ENCODE measurements at regions of chr1 and their contacts with region 1.

Region 1: DNA sequence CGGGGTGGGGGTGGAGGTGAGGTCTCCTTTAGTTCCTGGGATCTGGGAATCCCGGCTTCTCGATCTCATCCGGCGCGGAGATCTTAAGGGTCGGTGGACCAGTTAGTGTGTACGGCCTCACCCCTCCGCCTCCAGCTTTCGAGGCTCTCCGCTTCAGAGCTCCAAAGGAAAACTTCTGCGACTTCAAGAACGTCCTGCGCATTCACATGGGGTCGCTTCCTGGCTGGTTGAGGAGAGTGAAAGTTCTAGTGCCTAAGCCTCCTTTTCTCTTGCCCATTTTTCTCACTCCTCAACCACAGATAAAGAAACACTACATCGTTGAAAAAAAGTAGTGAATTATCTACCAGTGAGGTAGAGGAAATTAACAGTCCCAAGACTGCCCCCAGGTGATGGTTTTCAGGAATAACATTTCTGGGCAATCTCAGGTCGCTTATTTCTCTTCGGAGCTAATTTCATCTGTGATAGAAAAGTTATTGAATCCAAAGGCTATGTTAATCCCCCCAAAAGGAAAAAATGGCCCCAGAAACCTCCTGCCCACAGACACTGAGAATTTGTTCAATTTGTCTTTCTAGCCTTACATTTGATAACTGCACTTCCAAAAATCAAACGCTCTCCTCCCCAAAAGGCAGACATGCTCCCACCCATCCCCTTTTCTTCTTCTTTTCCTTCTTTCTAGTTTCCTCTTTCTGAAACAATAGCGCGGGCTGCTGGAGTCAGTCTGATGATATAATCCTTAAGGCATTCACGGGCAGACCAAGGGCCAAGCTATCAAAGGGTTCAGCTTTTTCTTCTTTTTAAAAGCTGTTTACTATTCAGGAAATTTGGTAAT is 20.6 kb upstream of the TBX15 start:
- DNase-seq: peak; percentile 44
- ATAC-seq: peak; percentile 69
- H3K4me3 ChIP-seq: no peak overlapping the region
- H3K27ac ChIP-seq: no peak overlapping the region
- H3K4me1 ChIP-seq: no peaks in the 10 kb centered on the region
- H3K27me3 ChIP-seq: no peaks in the 10 kb centered on the region
- CTCF ChIP-seq: peak; percentile 69
- EP300 ChIP-seq: no peak
- POLR2A ChIP-seq: no peak
- RAD21 ChIP-seq: peak; percentile 73

Region 2: DNA sequence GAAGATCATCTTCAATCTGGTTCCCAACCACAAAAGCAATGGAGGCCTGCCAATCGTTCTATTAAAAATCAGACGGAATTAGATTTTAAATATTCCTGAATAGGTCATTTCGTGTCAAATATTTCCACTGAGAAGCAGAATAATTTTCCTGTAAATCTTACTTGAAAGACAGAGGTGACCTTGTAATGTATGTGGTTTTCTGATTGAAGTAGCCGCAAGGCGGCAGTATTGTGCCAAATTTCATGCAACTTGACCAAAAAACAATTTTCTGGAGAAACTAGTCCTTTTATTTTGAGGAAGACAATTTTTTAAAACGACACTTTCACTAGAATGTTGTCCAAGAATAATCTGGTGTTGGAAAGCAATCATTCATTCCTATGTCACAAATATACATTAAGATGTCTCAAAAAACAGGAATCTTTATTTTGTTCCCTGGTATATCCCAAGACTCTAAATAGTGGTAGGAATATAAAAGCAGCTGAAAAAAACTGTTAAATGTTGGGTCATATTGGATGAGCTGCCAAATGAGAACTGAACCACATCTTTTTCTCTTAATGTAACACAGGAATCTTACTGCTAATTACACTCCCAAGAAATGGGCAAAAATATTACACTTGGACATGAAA is 857.3 kb before region 1 on chr1:
- CTCF ChIA-PET with region 1: no interaction called
- POLR2A ChIA-PET with region 1: no interaction called
- in situ Hi-C with region 1: loop called (anchors 25 kb)
- intact Hi-C with region 1: no loop called
- DNase-seq: peak; percentile 23
- ATAC-seq: no peak
- H3K4me3 ChIP-seq: no peak overlapping the region
- H3K27ac ChIP-seq: no peak overlapping the region
- H3K4me1 ChIP-seq: no peaks in the 10 kb centered on the region
- H3K27me3 ChIP-seq: no peaks in the 10 kb centered on the region
- CTCF ChIP-seq: peak; percentile 67
- EP300 ChIP-seq: no peak
- POLR2A ChIP-seq: no peak
- RAD21 ChIP-seq: no peak

Region 3: DNA sequence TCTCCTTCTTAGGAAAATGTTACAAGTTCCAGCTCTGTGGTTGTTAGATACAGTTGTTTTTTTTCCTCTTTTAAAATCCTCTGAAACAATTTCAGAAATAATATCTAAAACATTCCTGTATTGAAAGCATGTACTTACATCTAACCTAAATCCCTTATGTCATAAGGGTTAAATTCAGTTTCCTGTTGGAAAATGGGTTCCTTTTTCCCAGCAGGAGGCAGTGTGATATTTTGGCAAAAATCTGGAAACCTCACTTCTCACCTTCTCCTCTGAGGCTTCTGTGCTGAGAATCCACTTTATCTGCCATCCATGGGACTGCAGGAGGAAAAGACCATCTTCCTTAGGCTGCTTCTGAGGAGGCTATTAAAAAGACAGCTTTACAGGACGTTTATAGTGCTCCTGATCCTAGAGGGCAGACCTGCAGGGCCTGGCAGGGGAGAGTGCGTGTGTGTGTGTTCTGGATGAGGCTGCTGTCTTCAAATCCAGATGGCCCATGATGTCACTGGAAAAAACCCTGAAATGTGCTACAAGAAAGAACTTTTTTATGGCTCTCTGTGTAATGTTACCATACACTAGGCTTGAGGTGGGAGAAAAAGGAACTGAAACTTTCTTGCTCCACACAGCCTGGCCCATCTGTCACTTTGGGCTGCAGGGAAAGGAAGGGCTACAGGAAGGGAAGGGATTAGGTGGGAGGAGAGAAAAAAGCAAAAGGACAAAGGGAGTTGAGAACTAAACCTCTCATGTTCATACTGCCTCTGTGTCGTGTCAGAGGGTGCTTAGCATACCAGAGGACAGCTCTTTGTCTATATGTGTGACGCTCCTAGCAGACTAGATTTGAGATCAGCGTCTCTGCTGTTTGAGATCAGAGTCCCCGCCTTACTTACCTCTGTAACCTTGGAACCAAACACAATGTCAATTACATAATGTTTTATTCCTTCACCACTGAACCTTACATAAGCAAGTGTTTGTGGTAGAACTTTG is 444.4 kb before region 1 on chr1:
- CTCF ChIA-PET with region 1: no interaction called
- POLR2A ChIA-PET with region 1: no interaction called
- in situ Hi-C with region 1: loop called (anchors 25 kb)
- intact Hi-C with region 1: no loop called
- DNase-seq: no peak
- ATAC-seq: no peak
- H3K4me3 ChIP-seq: no peak overlapping the region
- H3K27ac ChIP-seq: no peak overlapping the region
- H3K4me1 ChIP-seq: no peaks in the 10 kb centered on the region
- H3K27me3 ChIP-seq: no peaks in the 10 kb centered on the region
- CTCF ChIP-seq: peak; percentile 19
- EP300 ChIP-seq: no peak
- POLR2A ChIP-seq: no peak
- RAD21 ChIP-seq: no peak

Region 4: DNA sequence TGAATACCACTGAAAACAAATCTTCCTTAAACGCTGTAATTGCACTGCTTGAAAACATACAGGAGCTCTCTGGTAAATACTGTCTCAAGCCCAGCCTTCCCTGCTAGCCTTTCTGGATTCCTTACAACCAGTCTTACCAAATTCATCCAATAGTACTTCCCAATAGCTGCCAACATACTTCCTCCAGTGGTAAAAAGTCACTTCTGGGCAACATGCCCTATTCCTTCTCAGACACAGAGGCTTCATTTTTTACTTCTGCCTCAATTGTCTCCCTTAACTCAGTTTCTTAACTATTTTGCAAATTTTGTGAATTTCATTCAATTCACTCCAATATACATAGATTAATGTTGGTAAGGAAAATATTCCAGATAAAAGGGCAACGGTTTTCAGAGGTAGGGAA is 186.9 kb before region 1 on chr1:
- CTCF ChIA-PET with region 1: interaction called, 6 read pairs
- POLR2A ChIA-PET with region 1: no interaction called
- in situ Hi-C with region 1: no loop called
- intact Hi-C with region 1: loop called (anchors 5 kb)
- DNase-seq: no peak
- ATAC-seq: no peak
- H3K4me3 ChIP-seq: no peak overlapping the region
- H3K27ac ChIP-seq: no peak overlapping the region
- H3K4me1 ChIP-seq: no peaks in the 10 kb centered on the region
- H3K27me3 ChIP-seq: no peaks in the 10 kb centered on the region
- CTCF ChIP-seq: no peak
- EP300 ChIP-seq: no peak
- POLR2A ChIP-seq: no peak
- RAD21 ChIP-seq: no peak

Region 5: DNA sequence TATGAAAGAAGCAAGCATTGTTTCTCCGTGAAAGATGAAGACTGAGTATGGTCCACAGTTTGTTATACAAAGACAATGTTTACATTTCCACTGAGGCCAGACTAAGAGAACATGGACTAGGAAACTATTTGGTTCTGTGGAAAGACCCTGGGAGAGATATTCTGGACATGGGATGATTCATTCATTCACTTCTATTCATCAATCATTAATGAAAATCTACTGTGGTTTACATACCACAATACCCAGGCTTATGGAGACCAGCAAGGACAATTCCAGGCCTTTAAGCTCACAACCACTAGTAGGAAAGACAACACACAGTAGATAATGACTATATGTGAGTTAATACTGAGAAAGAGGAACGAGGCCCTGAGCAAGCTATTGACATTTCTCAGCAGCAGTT is 145.9 kb before region 1 on chr1:
- CTCF ChIA-PET with region 1: no interaction called
- POLR2A ChIA-PET with region 1: no interaction called
- in situ Hi-C with region 1: no loop called
- intact Hi-C with region 1: loop called (anchors 5 kb)
- DNase-seq: peak; percentile 9
- ATAC-seq: peak; percentile 48; the same call in 1 of the 3 replicates
- H3K4me3 ChIP-seq: no peak overlapping the region
- H3K27ac ChIP-seq: no peak overlapping the region
- H3K4me1 ChIP-seq: peaks cover 16% of the 10 kb centered on the region; the same call in 1 of the 2 replicates
- H3K27me3 ChIP-seq: no peaks in the 10 kb centered on the region
- CTCF ChIP-seq: no peak
- EP300 ChIP-seq: no peak
- POLR2A ChIP-seq: no peak
- RAD21 ChIP-seq: no peak

Region 6: GRCh38 chr1:118960026-118960561 is 48.6 kb before region 1 on chr1:
- CTCF ChIA-PET with region 1: no interaction called
- POLR2A ChIA-PET with region 1: no interaction called
- in situ Hi-C with region 1: no loop called
- intact Hi-C with region 1: no loop called
- DNase-seq: no peak
- ATAC-seq: no peak
- H3K4me3 ChIP-seq: peak overlapping the region in 1 of 3 experiments; percentile 16; a peak in 1 of 6 replicates
- H3K27ac ChIP-seq: peak overlapping the region; percentile 98
- H3K4me1 ChIP-seq: peaks cover 73% of the 10 kb centered on the region
- H3K27me3 ChIP-seq: no peaks in the 10 kb centered on the region
- CTCF ChIP-seq: no peak
- EP300 ChIP-seq: no peak
- POLR2A ChIP-seq: no peak
- RAD21 ChIP-seq: no peak

Region 7: DNA sequence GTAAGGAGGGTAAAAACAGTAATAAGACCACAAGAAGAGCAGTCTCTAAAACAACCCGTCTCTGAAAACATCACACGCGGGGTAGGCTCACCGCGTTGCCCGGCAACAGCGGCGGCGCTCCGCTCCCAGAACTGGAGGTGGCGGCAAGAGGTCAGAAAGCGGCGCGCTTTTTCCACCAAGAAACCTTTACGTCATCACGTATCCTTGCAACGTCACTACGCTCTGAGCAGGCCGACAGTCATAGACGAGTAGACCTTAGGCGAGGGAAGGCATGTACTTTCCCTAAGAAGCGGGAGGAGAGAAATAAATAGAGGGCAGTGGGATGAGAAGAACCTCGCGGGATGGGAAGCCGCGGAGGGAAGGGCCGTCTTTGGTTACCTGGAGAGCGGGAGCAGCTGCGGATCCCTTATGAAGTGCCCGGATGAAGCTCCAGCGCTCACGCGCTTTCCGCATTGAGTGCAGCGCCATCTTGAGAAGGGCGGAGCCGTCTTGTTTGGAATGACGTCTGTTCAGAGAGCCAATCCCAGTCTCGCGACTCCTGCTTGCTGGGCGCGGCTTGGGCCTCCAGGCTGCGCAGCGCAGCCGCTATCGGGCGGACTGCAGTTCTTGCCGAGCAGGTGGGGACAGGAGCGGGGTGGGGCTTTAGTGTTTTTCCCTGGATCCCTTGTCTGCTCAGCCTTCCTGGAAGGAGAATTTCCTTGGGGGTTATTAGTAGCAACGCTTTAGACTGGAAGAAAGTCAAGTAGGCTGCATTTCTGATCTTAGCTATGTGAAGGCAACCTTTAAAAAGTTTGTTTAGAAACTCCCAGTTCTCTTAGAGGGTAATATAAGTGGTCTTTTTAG is 131.7 kb after region 1 on chr1 and contains the start of gene WARS2:
- CTCF ChIA-PET with region 1: no interaction called
- POLR2A ChIA-PET with region 1: no interaction called
- in situ Hi-C with region 1: no loop called
- intact Hi-C with region 1: no loop called
- DNase-seq: peak; percentile 95
- ATAC-seq: peak; percentile 99
- H3K4me3 ChIP-seq: peak within 1 kb of the TSS; percentile 75 to 85 (median 75)
- H3K27ac ChIP-seq: peak within 1 kb of the TSS; percentile 91
- H3K4me1 ChIP-seq: peaks cover 30% of the 10 kb centered on the region
- H3K27me3 ChIP-seq: no peaks in the 10 kb centered on the region
- CTCF ChIP-seq: peak; percentile 25; the same call in 1 of the 2 replicates
- EP300 ChIP-seq: no peak; a peak in 1 of 4 replicates
- POLR2A ChIP-seq: peak; percentile 86 to 92
- RAD21 ChIP-seq: peak; percentile 17; the same call in 1 of the 2 replicates
- total RNA-seq, gene WARS2: 18.8 and 27.5 TPM in 2 replicates

Measured in HepG2 (cell line).